ENCODE measurements at regions of chr12 and their contacts with region 1.

Region 1: GRCh38 chr12:46372544-46373110 is at the start of gene SLC38A2:
- DNase-seq: peak; percentile 97
- ATAC-seq: peak; percentile 81 to 96 (median 81)
- H3K4me3 ChIP-seq: peak within 1 kb of the TSS; percentile 100
- H3K4me3 Mint-ChIP-seq: peak within 1 kb of the TSS; percentile 100
- H3K27ac ChIP-seq: peak within 1 kb of the TSS; percentile 96
- H3K27ac Mint-ChIP-seq: peak within 1 kb of the TSS; percentile 99
- H3K4me1 ChIP-seq: peaks cover 27% of the 10 kb centered on the region
- H3K4me1 Mint-ChIP-seq: peaks cover 65 to 66% of the 10 kb centered on the region in 2 donors
- H3K27me3 ChIP-seq: no peaks in the 10 kb centered on the region
- H3K27me3 Mint-ChIP-seq: no peaks in the 10 kb centered on the region
- CTCF ChIP-seq: no peak
- total RNA-seq, gene SLC38A2: 131 to 241 (median 167) TPM

Region 2: GRCh38 chr12:45990468-45991283 is 382.0 kb before region 1 on chr12 and contains the start of gene SCAF11:
- intact Hi-C with region 1: loop called (anchors 1 kb)
- DNase-seq: peak; percentile 100
- ATAC-seq: peak; percentile 83 to 96 (median 85)
- H3K4me3 ChIP-seq: peak within 1 kb of the TSS; percentile 69
- H3K4me3 Mint-ChIP-seq: peak within 1 kb of the TSS; percentile 96
- H3K27ac ChIP-seq: peak within 1 kb of the TSS; percentile 89
- H3K27ac Mint-ChIP-seq: peak within 1 kb of the TSS; percentile 98
- H3K4me1 ChIP-seq: peaks cover 12% of the 10 kb centered on the region
- H3K4me1 Mint-ChIP-seq: peaks cover 49 to 52% of the 10 kb centered on the region in 2 donors
- H3K27me3 ChIP-seq: no peaks in the 10 kb centered on the region
- H3K27me3 Mint-ChIP-seq: peaks cover 0 to 2% of the 10 kb centered on the region in 2 donors
- CTCF ChIP-seq: peak; percentile 78
- total RNA-seq, gene SCAF11: 208 to 232 (median 220) TPM

Region 3: GRCh38 chr12:46268590-46269558 is 103.8 kb before region 1 on chr12 and contains the start of gene SLC38A1:
- intact Hi-C with region 1: loop called (anchors 2 kb)
- DNase-seq: peak; percentile 85 to 95
- ATAC-seq: peak; percentile 61 to 81 (median 78)
- H3K4me3 ChIP-seq: peak within 1 kb of the TSS; percentile 74
- H3K4me3 Mint-ChIP-seq: no peak within 1 kb of the TSS
- H3K27ac ChIP-seq: peak within 1 kb of the TSS; percentile 94
- H3K27ac Mint-ChIP-seq: no peak within 1 kb of the TSS
- H3K4me1 ChIP-seq: peaks cover 23% of the 10 kb centered on the region
- H3K4me1 Mint-ChIP-seq: peaks cover 11 to 17% of the 10 kb centered on the region in 2 donors
- H3K27me3 ChIP-seq: no peaks in the 10 kb centered on the region
- H3K27me3 Mint-ChIP-seq: no peaks in the 10 kb centered on the region
- CTCF ChIP-seq: no peak
- total RNA-seq, gene SLC38A1: 295 to 385 (median 354) TPM

Region 4: DNA sequence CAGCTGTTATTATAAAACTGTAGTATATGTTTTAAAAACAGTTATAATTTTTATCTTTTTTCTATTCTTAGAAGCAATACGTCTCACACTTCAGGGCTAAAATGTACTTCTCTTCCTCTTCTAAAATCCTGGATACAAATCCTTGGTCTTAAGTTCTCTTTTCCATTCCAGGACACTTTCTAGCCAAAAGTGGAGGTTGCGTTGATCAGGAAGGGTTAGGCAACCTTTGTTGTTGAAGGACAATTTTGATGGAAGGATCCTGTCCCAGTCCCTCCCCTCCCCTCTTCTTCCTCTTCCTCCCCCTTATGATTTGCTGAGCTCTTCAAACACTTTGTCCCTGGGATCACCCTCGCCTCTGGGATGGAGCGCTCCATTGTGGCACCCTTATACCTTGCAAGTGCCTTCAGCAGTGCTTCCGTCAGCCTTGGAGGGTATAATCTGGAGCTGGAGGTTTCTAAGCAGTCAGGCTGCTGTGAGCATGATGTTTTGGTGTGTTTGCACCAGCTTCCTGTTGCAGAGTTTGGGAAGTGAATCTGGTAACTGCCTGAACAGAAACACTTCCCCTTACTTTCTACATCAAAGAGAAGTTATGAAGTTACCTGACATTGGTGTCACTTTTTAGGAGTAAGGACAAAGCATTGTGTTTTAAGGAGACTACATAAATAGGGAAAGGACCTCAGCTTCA is 87.4 kb after region 1 on chr12:
- intact Hi-C with region 1: loop called (anchors 2 kb)
- DNase-seq: peak in 1 of 2 donors; percentile 37
- ATAC-seq: no peak
- H3K4me3 ChIP-seq: no peak overlapping the region
- H3K4me3 Mint-ChIP-seq: peak overlapping the region; percentile 76
- H3K27ac ChIP-seq: peak overlapping the region; percentile 10
- H3K27ac Mint-ChIP-seq: peak overlapping the region; percentile 87 to 89
- H3K4me1 ChIP-seq: peaks cover 35% of the 10 kb centered on the region
- H3K4me1 Mint-ChIP-seq: peaks cover 62 to 63% of the 10 kb centered on the region in 2 donors
- H3K27me3 ChIP-seq: no peaks in the 10 kb centered on the region
- H3K27me3 Mint-ChIP-seq: no peaks in the 10 kb centered on the region
- CTCF ChIP-seq: no peak

Region 5: DNA sequence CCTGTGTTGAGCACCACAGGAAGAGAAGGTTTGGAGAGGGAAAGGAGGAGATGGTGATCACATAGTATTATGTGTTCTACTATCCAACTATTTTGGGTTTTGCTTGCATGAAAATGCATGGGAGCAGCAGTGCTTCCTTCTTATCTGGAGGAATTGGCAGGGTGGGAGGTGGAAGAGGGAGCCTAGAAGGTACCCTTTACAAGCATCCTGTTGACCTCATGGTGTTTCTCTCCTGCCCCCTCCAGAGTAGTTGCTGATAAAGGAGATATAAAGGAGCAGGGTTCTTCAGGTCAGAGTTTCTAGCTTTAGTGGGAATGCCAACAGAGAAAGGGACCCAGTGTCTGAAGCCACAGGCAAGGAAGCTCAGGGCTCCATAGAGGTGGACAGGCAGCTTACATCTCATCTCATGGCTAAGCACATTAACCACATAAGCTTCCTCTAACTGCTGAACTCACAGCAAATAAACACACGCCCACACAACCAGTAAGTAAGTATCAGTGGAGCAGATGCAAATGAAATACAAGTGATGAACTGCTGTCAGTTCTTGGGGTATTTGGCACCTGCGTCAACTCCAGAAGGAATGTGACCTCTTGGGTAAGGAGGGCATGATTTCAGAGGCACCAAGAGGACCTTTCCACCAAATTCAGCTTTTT is 174.1 kb after region 1 on chr12:
- intact Hi-C with region 1: loop called (anchors 5 kb)
- DNase-seq: peak in 1 of 2 donors; percentile 26
- ATAC-seq: peak; percentile 81 to 97 (median 90)
- H3K4me3 ChIP-seq: no peak overlapping the region
- H3K4me3 Mint-ChIP-seq: peak overlapping the region; percentile 80
- H3K27ac ChIP-seq: peak overlapping the region; percentile 62
- H3K27ac Mint-ChIP-seq: peak overlapping the region; percentile 84 to 92
- H3K4me1 ChIP-seq: peaks cover 28% of the 10 kb centered on the region
- H3K4me1 Mint-ChIP-seq: peaks cover 80 to 89% of the 10 kb centered on the region in 2 donors
- H3K27me3 ChIP-seq: no peaks in the 10 kb centered on the region
- H3K27me3 Mint-ChIP-seq: no peaks in the 10 kb centered on the region
- CTCF ChIP-seq: no peak

Region 6: DNA sequence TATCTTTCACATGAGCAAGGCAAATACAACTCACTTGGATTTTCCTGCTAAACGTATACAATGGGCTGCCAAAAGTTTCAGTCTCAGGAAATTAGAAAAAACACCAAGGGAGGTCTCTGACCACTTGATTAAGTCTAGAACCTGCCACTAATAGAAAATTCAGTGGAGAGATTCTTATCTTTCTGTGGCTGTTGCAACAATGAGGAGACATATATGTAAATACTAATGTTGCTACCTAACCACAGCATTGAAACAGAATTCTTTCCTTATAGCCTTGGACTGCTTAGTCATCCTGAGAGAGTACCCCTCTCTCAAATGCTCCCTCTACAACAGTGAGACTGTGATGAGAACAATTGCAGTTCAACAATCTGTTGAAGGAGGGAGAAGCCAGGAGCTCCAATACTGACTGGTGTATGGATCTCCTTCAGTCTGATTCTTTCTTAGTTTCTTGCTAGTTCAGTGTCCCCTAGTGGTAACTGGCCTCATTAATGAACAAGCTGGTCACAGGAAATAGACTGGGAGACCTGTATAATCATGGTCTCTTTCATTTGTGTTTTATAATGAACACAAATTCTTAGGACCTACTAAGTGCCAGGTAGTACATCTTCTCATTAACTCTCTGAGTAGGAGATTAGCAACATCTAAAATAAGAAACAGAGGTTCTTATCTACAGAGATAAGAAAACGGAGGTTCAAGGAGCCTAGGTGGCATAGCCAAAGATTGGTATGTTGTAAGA is 288.7 kb after region 1 on chr12:
- intact Hi-C with region 1: loop called (anchors 2 kb)
- DNase-seq: peak in 1 of 2 donors; percentile 70
- ATAC-seq: peak; percentile 64 to 73 (median 73)
- H3K4me3 ChIP-seq: no peak overlapping the region
- H3K4me3 Mint-ChIP-seq: peak overlapping the region; percentile 56
- H3K27ac ChIP-seq: peak overlapping the region; percentile 35
- H3K27ac Mint-ChIP-seq: peak overlapping the region; percentile 55 to 83
- H3K4me1 ChIP-seq: peaks cover 3% of the 10 kb centered on the region
- H3K4me1 Mint-ChIP-seq: peaks cover 46% of the 10 kb centered on the region in 2 donors
- H3K27me3 ChIP-seq: no peaks in the 10 kb centered on the region
- H3K27me3 Mint-ChIP-seq: no peaks in the 10 kb centered on the region
- CTCF ChIP-seq: peak; percentile 62

Region 7: DNA sequence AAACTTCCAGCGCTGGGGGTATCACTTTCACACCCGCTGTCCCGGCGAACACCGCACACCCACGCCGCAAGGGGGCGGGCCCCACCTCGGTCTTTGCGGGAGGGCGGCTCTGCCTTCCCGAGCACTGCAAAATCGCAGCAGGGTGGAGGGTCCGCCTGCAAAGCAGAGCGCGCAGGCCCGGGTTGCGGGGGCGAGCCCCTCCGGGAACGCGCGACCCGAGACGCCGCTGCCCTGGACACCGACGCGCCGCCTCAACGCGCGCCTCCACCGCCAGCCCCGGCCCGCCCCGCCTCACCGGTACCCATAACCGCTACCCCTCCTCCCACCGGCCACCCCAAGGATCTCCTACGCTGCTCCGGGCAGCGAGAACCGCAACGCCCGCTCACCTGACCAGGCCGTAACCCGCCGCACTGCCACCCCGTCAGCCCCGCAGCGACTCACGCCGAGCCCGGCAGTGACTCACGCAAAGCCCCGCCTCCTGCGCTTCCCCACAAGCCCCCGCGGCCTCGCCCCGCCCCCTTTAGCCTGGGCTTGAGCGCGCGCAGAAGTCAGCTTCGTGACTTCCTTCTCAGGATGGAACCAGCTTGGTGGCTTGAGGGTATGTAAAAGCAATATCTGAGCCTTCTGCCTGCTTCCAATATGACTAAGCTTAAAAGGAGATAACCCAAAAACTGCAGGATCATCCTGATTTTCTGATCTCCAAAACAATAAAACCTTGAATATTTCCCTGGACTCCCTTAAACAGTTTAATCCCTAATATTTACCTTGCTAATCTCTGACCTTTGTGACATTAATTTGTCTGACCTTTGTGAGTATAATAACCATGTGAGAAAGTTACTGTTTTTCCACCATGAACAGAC is 1333.2 kb after region 1 on chr12 and contains the start of gene RPAP3:
- intact Hi-C with region 1: loop called (anchors 10 kb)
- DNase-seq: peak; percentile 97 to 98
- ATAC-seq: peak; percentile 90 to 98 (median 92)
- H3K4me3 ChIP-seq: peak within 1 kb of the TSS; percentile 80
- H3K4me3 Mint-ChIP-seq: peak within 1 kb of the TSS; percentile 99
- H3K27ac ChIP-seq: peak within 1 kb of the TSS; percentile 84
- H3K27ac Mint-ChIP-seq: peak within 1 kb of the TSS; percentile 96 to 98
- H3K4me1 ChIP-seq: peaks cover 27% of the 10 kb centered on the region
- H3K4me1 Mint-ChIP-seq: peaks cover 52 to 60% of the 10 kb centered on the region in 2 donors
- H3K27me3 ChIP-seq: no peaks in the 10 kb centered on the region
- H3K27me3 Mint-ChIP-seq: no peaks in the 10 kb centered on the region
- CTCF ChIP-seq: peak; percentile 51
- total RNA-seq, gene RPAP3: 22.8 to 35.8 (median 24.8) TPM